CD4-positive, alpha-beta T cell (primary cell): ENCODE measurements at regions of chr14 and their contacts with region 1.

Region 1: DNA sequence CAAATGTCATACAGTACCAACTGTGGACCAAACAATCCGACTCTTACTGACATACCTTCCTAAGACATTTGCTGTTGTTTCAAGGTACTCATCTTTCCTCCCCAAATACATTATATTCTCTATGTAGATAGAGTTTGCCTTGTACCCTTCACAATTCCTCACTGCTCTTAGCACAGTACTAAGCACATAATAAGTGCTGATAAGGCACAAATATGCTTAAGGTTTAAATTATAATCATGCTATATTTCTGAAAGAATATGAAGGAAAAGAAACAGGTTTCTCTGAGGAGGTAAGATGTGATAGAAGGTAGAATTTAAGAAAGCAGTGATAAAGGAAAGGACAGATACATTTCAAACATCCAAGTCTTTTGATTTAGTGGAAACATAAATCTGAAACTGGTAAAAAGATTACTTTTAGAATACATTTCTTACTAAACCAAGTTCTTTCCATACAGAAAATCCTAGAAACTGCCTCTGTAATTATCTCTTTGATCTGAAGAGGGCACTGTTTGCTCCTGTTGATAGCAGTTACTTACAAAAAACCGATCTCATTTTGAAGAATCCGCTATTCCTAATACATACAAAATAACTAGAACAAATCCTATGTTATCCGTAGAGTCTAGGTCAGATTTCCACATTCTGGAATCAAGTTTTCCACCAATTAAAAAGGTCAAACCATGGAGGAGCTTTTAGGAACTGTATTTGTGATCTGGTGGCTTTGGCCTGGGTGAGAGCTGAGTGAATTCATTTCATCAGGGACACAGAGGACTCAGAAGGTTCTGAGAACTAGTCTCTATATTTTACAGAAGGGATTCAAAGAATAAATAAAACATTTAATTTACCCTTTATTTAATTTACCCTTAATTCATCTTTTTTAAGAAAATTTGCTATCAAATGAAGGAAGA is 311.9 kb downstream of the DAD1 start:
- DNase-seq: peak in 1 of 14 experiments; percentile 12
- ATAC-seq: no peak
- H3K4me3 ChIP-seq: no peak overlapping the region
- H3K4me3 Mint-ChIP-seq: peak overlapping the region; percentile 25
- H3K27ac ChIP-seq: no peak overlapping the region
- H3K27ac Mint-ChIP-seq: no peak overlapping the region
- H3K4me1 ChIP-seq: no peaks in the 10 kb centered on the region
- H3K4me1 Mint-ChIP-seq: peaks cover 7% of the 10 kb centered on the region
- H3K27me3 ChIP-seq: no peaks in the 10 kb centered on the region
- H3K27me3 Mint-ChIP-seq: no peaks in the 10 kb centered on the region
- CTCF ChIP-seq: peak; percentile 15

Region 2: GRCh38 chr14:22221508-22221907 is 55.7 kb before region 1 on chr14:
- CTCF ChIA-PET with region 1: no interaction called
- POLR2A ChIA-PET with region 1: no interaction called
- intact Hi-C with region 1: loop called in 1 of 2 experiments (anchors 10 kb)
- DNase-seq: peak in 3 of 14 experiments; percentile 39 to 51 (median 39)
- ATAC-seq: peak; percentile 41
- H3K4me3 ChIP-seq: no peak overlapping the region
- H3K4me3 Mint-ChIP-seq: peak overlapping the region; percentile 73
- H3K27ac ChIP-seq: no peak overlapping the region
- H3K27ac Mint-ChIP-seq: peak overlapping the region; percentile 67
- H3K4me1 ChIP-seq: no peaks in the 10 kb centered on the region
- H3K4me1 Mint-ChIP-seq: peaks cover 17% of the 10 kb centered on the region
- H3K27me3 ChIP-seq: no peaks in the 10 kb centered on the region
- H3K27me3 Mint-ChIP-seq: no peaks in the 10 kb centered on the region
- CTCF ChIP-seq: peak; percentile 12

Region 3: DNA sequence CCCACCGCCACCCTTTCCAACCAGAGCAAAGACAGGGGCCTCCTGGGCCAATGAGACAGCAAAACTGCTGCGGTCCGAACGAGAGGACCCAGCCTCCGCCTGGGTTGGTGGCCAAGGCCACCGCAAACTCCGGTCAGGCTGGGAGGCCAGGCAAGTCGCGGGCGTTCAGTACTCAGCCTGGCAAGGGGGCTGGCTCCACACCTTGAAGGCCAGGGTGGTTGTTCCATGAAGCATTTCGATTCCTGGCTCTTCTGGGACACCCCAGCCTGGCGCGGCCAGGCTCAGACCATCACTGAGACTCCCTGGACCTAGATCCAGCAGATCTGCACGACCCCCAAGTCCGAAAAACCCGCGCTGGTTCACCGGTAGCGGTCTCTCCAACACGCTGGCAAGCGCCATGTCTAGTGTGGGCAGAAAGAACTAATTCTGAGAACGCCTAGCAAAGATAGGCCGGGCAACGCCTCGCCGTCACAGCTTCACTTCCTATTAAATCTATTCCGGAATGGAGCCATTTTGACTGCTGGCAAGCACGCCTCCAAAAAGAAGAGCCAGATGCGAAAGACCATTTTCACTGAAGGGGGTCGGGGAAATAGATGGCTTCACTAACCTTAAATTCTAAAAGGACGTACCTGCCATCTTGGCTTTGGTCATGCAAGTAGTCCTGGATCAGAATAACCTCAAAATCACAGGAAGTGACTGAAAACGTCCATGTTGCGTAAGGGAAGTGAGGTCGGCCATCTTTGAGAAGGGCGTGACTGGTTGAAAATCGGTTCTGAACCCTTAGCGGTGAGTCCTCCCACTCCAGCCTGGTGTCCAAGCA is 757.5 kb after region 1 on chr14 and contains the start of gene PSMB5:
- CTCF ChIA-PET with region 1: no interaction called
- POLR2A ChIA-PET with region 1: no interaction called
- intact Hi-C with region 1: no loop called
- DNase-seq: peak; percentile 76 to 97 (median 80)
- ATAC-seq: peak; percentile 89
- H3K4me3 ChIP-seq: peak within 1 kb of the TSS; percentile 59
- H3K4me3 Mint-ChIP-seq: peak within 1 kb of the TSS; percentile 90
- H3K27ac ChIP-seq: peak within 1 kb of the TSS; percentile 75 to 94
- H3K27ac Mint-ChIP-seq: peak within 1 kb of the TSS; percentile 92
- H3K4me1 ChIP-seq: peaks cover 16% of the 10 kb centered on the region
- H3K4me1 Mint-ChIP-seq: peaks cover 36% of the 10 kb centered on the region
- H3K27me3 ChIP-seq: no peaks in the 10 kb centered on the region
- H3K27me3 Mint-ChIP-seq: no peaks in the 10 kb centered on the region
- CTCF ChIP-seq: no peak
- total RNA-seq, gene PSMB5: 20.1 to 24.5 TPM